ENCODE measurements at regions of chr4 and their contacts with region 1.

Region 1: DNA sequence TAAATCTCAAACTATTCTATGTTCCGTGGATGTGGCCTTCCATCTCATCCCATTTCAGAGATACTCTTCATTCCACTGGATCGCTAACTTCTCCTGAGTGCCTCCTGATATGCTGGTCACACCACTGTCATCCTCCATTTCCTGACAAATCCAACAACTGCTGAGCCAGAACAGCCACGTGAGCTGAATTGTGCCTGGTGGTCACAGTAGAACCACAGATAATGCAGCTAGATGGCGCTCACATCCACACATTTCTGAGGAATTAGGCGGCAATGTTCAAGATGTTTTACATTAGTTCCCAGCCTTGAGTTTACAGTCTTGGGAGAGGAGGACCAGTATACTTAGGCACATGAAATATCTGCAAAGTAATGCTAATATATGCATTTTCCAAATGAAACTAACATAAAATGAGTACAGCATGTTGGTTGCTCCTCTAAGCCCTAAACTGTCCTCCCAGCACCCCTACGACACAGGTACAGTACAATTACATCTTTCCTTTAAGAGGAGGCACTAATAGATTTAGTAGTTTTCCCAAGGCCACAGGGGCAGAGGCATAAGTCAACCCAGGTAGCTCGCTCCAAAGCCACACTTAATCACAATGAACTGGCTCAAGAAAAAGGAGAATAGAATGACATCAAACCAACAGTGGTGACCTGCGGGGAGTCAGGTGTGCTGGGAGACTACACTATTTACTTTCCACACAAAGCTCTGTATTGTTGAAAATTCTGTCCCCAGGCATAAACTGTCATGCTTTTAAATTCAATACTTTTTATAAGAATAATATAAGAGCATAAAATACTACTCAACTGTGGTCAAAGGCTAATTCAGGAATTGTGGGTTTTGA is 134.2 kb downstream of the CHIC2 start:
- DNase-seq: peak; percentile 69
- H3K4me3 ChIP-seq: no peak overlapping the region
- H3K27ac ChIP-seq: peak overlapping the region; percentile 54
- H3K27me3 ChIP-seq: no peaks in the 10 kb centered on the region
- CTCF ChIP-seq: peak; percentile 73

Region 2: DNA sequence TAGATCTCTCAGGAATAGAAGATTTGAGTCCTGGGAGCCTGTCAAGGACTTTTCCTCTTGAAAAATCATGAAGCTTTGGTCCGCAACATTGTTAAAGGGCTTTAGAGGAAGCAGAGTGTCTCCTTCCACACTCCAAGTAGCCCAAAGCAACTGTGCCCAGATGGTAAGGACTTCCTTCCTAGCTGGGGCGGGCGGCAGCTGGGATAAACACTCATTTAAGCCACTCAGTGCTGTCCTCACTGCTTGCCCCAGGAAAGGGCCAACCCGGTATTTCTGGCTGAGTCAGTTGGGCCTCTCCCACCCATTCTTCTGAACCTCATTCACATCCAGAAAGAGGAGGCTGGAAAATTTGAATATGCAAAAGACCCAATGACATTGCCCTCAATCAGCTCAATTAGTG is 10.1 kb before region 1 on chr4:
- CTCF ChIA-PET with region 1: interaction called, 19 read pairs
- POLR2A ChIA-PET with region 1: interaction called, 5 read pairs
- DNase-seq: no peak
- H3K4me3 ChIP-seq: no peak overlapping the region
- H3K27ac ChIP-seq: no peak overlapping the region
- H3K27me3 ChIP-seq: no peaks in the 10 kb centered on the region
- CTCF ChIP-seq: no peak

Region 3: DNA sequence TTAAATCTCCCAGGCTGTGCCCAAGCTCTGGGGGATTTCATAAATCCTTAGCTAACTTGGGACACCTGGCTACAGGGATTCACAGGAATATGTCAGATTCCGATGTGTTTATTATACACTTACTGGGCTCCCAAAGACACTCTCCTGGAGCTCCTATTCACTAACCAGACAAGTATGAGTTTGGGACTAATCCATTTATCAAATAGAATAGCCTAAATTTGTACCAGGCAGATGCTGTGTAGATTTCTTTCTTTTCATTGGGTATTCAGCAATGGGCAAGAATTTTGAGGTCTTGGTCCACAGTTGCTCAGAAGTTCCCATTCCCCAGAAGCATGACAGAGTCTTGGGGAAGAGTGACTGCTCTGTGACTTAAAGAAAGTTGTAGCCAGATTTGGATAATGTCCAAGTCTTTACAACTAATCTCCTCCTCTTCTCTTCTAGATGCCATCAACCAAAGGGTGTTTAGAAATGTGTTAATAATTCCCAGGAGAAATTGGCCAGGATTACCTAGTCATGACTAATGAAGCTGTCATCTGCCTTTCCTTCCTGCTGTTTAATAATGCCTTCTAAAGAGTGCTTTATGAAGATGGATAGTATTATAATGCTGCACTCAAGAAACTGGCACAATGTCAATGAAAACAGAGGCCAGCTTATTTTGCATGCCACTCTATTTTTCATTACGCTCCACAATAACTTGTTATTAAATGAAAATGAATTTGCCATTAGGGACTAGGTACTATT is 13.3 kb after region 1 on chr4:
- CTCF ChIA-PET with region 1: interaction called, 12 read pairs
- POLR2A ChIA-PET with region 1: interaction called, 4 read pairs
- DNase-seq: no peak
- H3K4me3 ChIP-seq: no peak overlapping the region
- H3K27ac ChIP-seq: no peak overlapping the region
- H3K27me3 ChIP-seq: no peaks in the 10 kb centered on the region
- CTCF ChIP-seq: no peak

Region 4: DNA sequence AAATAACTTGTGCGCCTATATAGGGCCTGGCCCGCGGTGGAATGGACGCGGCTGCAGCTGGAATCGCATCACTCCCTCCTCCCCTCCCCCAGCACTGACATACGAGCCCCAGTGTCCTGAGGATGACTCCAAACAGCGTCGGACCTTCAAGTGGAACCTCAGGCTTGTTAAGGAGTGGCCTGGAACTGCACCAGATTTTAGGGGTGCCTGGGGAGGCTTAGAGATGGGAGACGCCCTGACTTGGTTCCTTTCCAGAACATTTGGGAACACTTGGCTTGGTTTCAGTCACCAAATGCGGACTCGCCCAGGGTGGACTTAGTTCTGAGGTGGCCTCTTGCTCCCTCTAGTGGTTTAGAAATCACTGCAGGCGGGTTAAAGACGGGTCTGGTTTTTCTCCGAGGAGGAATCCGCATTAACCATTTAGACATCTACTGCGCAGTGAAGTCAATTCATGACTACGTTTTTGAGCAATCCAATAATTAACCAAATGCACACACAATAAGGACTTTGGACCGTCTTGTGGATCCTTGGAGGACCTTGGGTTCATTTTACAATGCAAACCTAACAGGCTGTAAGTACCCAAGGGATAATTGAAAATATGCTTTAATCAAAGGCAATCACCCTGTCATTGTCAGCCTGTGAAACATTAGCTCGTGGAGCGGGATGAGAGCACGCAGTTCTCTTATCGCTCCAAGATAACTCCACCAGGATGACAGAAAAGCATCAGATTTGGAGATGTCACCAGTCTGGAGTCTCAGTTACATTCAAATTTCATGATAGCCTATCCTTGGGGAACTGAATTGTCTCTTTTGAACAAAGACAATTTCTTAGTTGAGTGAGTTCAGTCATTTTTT is 287.7 kb after region 1 on chr4:
- CTCF ChIA-PET with region 1: interaction called, 22 read pairs
- POLR2A ChIA-PET with region 1: no interaction called
- DNase-seq: peak; percentile 64
- H3K4me3 ChIP-seq: peak overlapping the region; percentile 61
- H3K27ac ChIP-seq: no peak overlapping the region
- H3K27me3 ChIP-seq: no peaks in the 10 kb centered on the region
- CTCF ChIP-seq: peak; percentile 92